AG04450 (cell line): ENCODE measurements at regions of chr3 and their contacts with region 1.

Region 1: GRCh38 chr3:148955544-148956346 is 35.6 kb upstream of the GYG1 start:
- DNase-seq: peak; percentile 87
- H3K4me3 ChIP-seq: no peak overlapping the region
- H3K27ac ChIP-seq: peak overlapping the region; percentile 93
- H3K27me3 ChIP-seq: no peaks in the 10 kb centered on the region
- CTCF ChIP-seq: peak; percentile 78

Region 2: GRCh38 chr3:148737104-148737530 is 218.6 kb before region 1 on chr3:
- CTCF ChIA-PET with region 1: no interaction called
- POLR2A ChIA-PET with region 1: no interaction called
- DNase-seq: no peak
- H3K4me3 ChIP-seq: no peak overlapping the region
- H3K27ac ChIP-seq: no peak overlapping the region
- H3K27me3 ChIP-seq: no peaks in the 10 kb centered on the region
- CTCF ChIP-seq: no peak

Region 3: GRCh38 chr3:148861277-148861869 is 94.4 kb before region 1 on chr3:
- CTCF ChIA-PET with region 1: interaction called, 238 read pairs
- POLR2A ChIA-PET with region 1: no interaction called
- DNase-seq: peak; percentile 11
- H3K4me3 ChIP-seq: no peak overlapping the region
- H3K27ac ChIP-seq: no peak overlapping the region
- H3K27me3 ChIP-seq: no peaks in the 10 kb centered on the region
- CTCF ChIP-seq: peak; percentile 64

Region 4: DNA sequence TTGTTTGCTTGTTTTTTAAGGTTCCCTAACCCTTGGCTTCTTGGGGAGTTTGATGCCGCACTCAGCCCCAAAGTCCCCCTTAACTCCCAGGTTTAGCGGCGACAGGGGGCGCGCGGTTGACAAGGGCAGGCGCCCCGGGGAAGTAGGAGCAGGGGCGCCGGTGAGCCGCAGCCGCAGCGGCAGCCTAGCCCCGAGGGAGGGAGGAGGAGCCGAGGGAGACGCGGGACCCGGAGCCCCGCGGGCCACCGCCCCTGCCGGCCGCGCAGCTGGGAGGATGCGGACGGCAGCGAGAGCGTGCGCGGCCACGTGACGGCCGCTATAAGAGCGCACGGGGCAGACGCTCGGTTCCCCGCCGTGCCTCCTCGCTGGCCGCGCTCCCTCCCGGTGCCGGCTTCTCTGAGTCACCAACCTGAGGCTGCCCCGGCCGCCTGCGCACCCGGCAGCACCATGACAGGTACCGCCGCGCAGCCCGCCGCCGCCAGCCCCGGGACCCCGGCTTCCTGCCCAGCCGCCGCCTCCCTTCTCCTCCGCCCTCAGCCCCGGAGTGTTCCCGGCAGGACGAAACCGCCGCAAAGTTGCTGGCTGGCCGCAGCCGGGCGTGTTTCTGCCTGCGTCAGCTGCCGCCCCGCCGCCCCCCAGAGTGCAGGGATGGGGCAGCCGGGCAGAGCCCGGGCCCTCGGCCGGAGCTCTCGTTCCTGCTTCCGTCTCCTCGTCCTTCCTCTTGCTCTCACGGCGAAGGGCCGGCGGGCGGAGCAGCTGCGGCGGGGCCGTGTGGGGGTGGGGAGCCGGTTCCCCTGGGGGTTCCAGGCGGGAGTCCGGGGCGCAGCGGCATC is 35.7 kb after region 1 on chr3 and contains the start of gene GYG1:
- CTCF ChIA-PET with region 1: interaction called, 13 read pairs
- POLR2A ChIA-PET with region 1: interaction called, 3 read pairs
- DNase-seq: peak; percentile 38
- H3K4me3 ChIP-seq: peak within 1 kb of the TSS; percentile 68
- H3K27ac ChIP-seq: peak within 1 kb of the TSS; percentile 69
- H3K27me3 ChIP-seq: no peaks in the 10 kb centered on the region
- CTCF ChIP-seq: peak; percentile 31
- polyA plus RNA-seq, gene GYG1: 70.0 and 75.2 TPM in 2 replicates

Region 5: GRCh38 chr3:149129326-149130205 is 173.8 kb after region 1 on chr3 and contains the start of gene HPS3:
- CTCF ChIA-PET with region 1: interaction called, 11 read pairs
- POLR2A ChIA-PET with region 1: interaction called, 13 read pairs
- DNase-seq: peak; percentile 66
- H3K4me3 ChIP-seq: peak within 1 kb of the TSS; percentile 81
- H3K27ac ChIP-seq: peak within 1 kb of the TSS; percentile 80
- H3K27me3 ChIP-seq: no peaks in the 10 kb centered on the region
- CTCF ChIP-seq: no peak
- polyA plus RNA-seq, gene HPS3: 22.8 and 28.1 TPM in 2 replicates

Region 6: DNA sequence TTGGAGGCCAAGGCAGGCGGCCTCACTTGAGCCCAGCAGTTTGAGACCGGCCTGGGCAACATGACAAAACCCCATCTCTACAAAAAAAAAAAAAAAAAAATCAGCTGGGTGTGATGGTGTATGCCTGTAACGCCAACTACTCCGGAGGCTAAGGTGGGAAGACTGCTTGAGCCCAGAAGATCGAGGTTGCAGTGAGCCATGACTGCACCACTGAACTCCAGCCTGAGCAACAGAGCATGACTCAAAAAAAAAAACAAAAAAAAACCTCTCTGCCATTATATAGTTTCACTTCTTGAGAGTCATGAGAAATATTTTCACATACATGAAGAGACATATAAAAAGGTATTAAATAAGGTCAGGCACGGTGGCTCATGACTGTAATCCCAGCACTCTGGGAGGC is 311.8 kb after region 1 on chr3:
- CTCF ChIA-PET with region 1: interaction called, 105 read pairs
- POLR2A ChIA-PET with region 1: interaction called, 4 read pairs
- DNase-seq: no peak
- H3K4me3 ChIP-seq: no peak overlapping the region
- H3K27ac ChIP-seq: no peak overlapping the region
- H3K27me3 ChIP-seq: no peaks in the 10 kb centered on the region
- CTCF ChIP-seq: no peak

Region 7: DNA sequence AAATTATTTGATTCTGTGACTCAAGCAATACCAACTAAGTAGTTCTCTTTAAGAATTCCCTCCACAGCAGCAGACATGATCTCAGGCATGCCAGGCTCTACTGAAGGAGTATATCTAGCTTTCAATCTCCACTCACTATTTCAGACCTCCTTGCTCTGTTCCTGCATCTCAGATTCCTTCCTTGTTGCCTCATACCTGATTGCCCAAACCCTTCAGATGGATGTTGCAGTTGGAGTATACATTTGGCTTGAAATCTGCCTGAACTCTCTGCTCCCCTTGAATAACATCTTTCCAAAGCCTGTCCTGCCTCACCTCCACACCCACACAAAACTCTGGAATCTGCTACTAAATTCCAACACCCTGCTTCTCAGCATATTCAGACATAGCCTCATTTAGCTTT is 499.0 kb after region 1 on chr3:
- CTCF ChIA-PET with region 1: interaction called, 11 read pairs
- POLR2A ChIA-PET with region 1: no interaction called
- DNase-seq: peak; percentile 60
- H3K4me3 ChIP-seq: no peak overlapping the region
- H3K27ac ChIP-seq: no peak overlapping the region
- H3K27me3 ChIP-seq: no peaks in the 10 kb centered on the region
- CTCF ChIP-seq: no peak

Region 8: GRCh38 chr3:149717391-149718056 is 761.8 kb after region 1 on chr3:
- CTCF ChIA-PET with region 1: interaction called, 11 read pairs
- POLR2A ChIA-PET with region 1: no interaction called
- DNase-seq: peak; percentile 45
- H3K4me3 ChIP-seq: no peak overlapping the region
- H3K27ac ChIP-seq: no peak overlapping the region
- H3K27me3 ChIP-seq: no peaks in the 10 kb centered on the region
- CTCF ChIP-seq: peak; percentile 80